Posterior cingulate gyrus (tissue), 11 donors: ENCODE measurements at regions of chr1 and their contacts with region 1.

Region 1: DNA sequence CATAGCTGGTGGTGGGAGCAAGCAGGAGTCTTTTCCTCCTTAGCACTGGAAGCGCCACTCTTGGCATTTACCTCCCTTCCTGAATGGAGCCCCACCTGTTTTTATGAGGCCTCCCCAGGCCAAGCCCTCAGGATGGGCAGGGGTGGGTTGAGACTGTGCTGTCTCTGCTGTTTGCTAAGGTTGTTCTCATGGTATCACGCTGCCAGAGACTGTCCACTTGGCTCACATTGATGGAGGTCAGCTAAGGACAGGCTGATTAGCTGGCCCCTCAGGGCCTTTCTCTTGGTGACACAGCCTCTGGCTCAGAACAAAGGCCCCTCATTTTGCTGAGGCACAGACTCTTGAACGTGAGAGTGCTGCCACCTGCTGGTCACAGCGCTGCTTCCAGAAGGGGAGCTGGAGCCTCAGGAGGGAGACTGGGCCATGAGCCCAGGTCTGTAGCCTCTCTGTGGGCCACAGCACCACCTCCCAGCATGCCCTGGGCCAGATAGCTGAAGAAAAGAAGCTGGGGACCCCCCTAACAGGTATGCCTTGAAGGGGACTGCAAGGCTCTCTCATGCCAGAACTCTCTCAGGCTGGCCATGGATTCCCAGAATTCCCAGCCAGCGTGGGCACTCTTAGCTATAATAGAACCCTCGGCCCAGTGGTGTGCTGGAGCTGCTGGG is 85.6 kb downstream of the CD58 start:
- DNase-seq: peak; percentile 73 to 98 (median 94)

Region 2: GRCh38 chr1:116139592-116140134 is 345.5 kb before region 1 on chr1:
- intact Hi-C with region 1: loop called (anchors 1 kb)
- DNase-seq: no peak

Region 3: DNA sequence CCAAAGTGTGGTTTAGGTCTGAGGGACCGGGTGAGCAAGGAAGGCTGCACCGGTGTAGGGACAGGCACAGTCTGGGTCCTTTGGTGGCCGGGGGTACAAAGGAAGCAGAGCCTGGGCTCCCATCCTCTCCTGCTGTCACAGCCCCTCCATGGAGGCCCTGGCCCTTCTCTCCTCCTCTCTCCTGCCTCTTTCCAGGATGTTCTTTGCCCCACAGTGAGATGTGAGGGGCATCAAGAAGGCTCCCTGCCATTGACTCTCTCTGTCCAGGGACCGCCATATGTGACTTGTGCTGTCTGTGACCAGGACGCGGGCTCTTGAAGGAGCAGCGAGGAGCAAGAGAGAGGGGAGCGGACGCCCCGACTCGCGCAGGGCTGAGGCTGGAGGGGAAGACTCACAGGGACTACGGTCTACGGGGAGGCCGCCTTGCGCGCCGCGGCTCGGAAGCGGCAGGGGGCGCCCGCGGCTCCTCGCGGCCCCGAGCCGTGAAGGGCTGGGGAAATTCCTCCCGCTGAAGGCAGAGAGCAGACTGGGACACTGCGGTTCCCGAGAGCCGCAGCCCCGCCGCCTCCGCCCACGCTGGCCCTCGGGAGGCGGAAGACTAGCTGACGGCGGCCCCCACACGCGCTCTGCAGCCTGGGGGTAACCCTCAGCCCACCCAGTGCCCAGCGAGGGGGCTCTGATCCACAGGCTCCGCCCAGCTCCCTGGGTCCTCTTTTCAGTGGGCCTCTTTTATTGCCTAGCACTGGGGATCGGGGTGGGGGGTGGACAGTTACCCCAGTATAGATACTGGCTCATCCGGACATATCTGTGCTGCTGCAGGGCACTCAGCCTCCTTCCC is 333.2 kb before region 1 on chr1:
- intact Hi-C with region 1: loop called (anchors 5 kb)
- DNase-seq: peak; percentile 60 to 97 (median 78)

Region 4: DNA sequence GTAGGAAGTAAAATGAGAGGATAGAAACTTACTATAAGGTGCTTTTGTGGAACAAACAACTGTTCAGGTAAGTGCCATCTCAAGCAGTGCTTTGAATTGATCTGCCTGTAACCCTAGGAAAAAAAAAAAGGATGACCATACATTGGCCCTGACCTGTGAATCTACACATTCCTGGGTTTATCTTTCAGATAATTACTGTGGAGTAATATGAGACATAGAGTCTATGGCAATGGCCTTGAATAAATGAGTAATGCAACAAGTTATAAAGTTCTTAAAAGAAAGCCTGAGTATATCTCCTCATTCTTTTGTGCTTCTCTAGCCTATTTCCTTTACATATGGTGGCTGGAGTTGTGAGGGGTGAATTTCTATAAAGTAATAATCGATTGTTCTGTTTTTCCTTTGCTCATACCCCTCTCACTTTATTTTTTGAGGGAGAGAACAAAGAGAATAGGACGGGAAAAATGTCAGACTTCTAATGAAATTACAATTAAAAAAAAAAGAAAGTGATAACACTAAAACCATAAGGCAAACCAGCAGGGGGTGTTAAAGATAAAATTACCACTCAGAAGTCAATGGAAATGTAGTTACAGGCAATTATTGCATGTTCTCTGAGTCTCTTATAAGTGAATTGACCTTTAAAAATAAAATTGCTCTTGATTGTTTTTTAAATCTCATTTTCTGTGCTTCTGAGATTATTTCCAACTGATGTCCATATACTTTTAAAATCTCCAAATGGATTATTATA is 124.6 kb before region 1 on chr1:
- intact Hi-C with region 1: loop called (anchors 1 kb)
- DNase-seq: no peak

Region 5: GRCh38 chr1:116433275-116434257 is 51.6 kb before region 1 on chr1:
- intact Hi-C with region 1: loop called (anchors 2 kb)
- DNase-seq: peak; percentile 81 to 98 (median 88)